PC-9 (cell line): ENCODE measurements at regions of chr6 and their contacts with region 1.

Region 1: GRCh38 chr6:88963139-88964090 is at the start of gene RNGTT:
- DNase-seq: peak; percentile 89 to 97
- H3K4me3 ChIP-seq: peak within 1 kb of the TSS; percentile 99
- H3K27ac ChIP-seq: peak within 1 kb of the TSS; percentile 72
- H3K4me1 ChIP-seq: 0 out of 2 replicates have a peak, but pooled peaks cover 3% of the 10 kb centered on the region
- H3K27me3 ChIP-seq: no peaks in the 10 kb centered on the region
- CTCF ChIP-seq: no peak
- total RNA-seq, gene RNGTT: 13.3 and 15.2 TPM in 2 replicates

Region 2: DNA sequence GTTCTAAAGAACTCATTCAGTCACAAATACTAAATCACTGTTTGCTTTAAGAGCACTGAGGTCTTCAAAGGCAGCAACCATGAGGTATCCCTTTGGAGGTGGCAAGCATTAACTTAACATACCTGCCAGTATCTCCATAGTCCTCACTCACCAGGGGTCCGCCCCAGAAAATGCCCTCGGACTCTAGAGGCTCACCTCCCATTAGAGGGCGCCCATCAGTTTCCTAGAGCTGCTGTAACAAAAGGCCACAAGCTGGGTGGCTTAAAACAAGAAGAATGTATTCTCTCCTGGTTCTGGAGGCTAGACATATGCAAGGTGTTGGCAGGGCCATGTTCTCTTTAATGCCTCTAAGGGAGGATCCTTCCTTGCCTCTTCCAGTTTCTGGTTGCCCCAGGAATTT is 12.0 kb after region 1 on chr6:
- CTCF ChIA-PET with region 1: interaction called, 3 read pairs
- POLR2A ChIA-PET with region 1: interaction called, 12 read pairs
- intact Hi-C with region 1: no loop called
- DNase-seq: no peak
- H3K4me3 ChIP-seq: no peak overlapping the region
- H3K27ac ChIP-seq: no peak overlapping the region
- H3K4me1 ChIP-seq: no peaks in the 10 kb centered on the region
- H3K27me3 ChIP-seq: no peaks in the 10 kb centered on the region
- CTCF ChIP-seq: no peak

Region 3: GRCh38 chr6:89297695-89298351 is 334.4 kb after region 1 on chr6:
- CTCF ChIA-PET with region 1: no interaction called
- POLR2A ChIA-PET with region 1: interaction called, 13 read pairs
- intact Hi-C with region 1: no loop called
- DNase-seq: peak; percentile 87 to 96
- H3K4me3 ChIP-seq: peak overlapping the region; percentile 37; the same call in 1 of the 2 replicates
- H3K27ac ChIP-seq: peak overlapping the region; percentile 100
- H3K4me1 ChIP-seq: peaks cover 36% of the 10 kb centered on the region
- H3K27me3 ChIP-seq: no peaks in the 10 kb centered on the region
- CTCF ChIP-seq: no peak

Region 4: GRCh38 chr6:89518317-89519050 is 555.1 kb after region 1 on chr6:
- CTCF ChIA-PET with region 1: no interaction called
- POLR2A ChIA-PET with region 1: no interaction called
- intact Hi-C with region 1: no loop called
- DNase-seq: no peak
- H3K4me3 ChIP-seq: no peak overlapping the region
- H3K27ac ChIP-seq: no peak overlapping the region
- H3K4me1 ChIP-seq: no peaks in the 10 kb centered on the region
- H3K27me3 ChIP-seq: no peaks in the 10 kb centered on the region
- CTCF ChIP-seq: no peak